Right lobe of liver (tissue), 6 donors: ENCODE measurements at regions of chr4 and their contacts with region 1.

Region 1: GRCh38 chr4:152843481-152844090 is 63.8 kb downstream of the ARFIP1 start:
- DNase-seq: no peak
- ATAC-seq: no peak
- H3K4me3 ChIP-seq: no peak overlapping the region
- H3K27ac ChIP-seq: no peak overlapping the region
- H3K4me1 ChIP-seq: no peaks in the 10 kb centered on the region
- H3K27me3 ChIP-seq: no peaks in the 10 kb centered on the region
- CTCF ChIP-seq: no peak
- POLR2A ChIP-seq: no peak

Region 2: DNA sequence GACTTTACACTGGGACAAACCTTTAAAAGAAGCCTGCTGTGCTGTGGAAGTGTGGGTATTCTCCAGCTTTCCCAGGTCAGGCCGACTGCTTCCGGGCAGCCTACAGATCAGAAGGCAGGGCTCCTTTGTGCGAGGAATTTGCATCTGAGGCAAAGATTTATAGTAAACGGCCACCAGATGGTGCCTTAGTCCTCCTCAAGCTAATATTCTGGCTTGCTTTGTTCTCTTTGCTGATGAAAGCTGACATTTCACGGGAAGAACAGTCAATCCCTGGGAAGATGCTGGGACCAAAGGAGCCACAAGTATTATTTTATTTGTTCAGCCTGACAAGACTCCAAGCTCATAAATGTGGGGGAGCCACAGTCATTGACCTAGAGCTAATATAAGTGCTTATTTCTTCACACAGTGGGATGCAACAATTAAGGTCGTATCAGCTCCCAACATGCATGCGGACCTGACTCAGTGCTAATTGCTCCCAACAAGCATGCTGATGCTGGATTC is 239.9 kb after region 1 on chr4:
- intact Hi-C with region 1: loop called in 1 of 2 experiments (anchors 10 kb)
- DNase-seq: peak in 2 of 3 donors; percentile 43 to 54
- ATAC-seq: peak; percentile 87 to 93 (median 90)
- H3K4me3 ChIP-seq: no peak overlapping the region
- H3K27ac ChIP-seq: no peak overlapping the region
- H3K4me1 ChIP-seq: peaks cover 0 to 8% (median 0%) of the 10 kb centered on the region in 4 donors
- H3K27me3 ChIP-seq: no peaks in the 10 kb centered on the region
- CTCF ChIP-seq: peak; percentile 56 to 65 (median 61)
- POLR2A ChIP-seq: no peak